ENCODE measurements at regions of chr4 and their contacts with region 1.

Region 1: DNA sequence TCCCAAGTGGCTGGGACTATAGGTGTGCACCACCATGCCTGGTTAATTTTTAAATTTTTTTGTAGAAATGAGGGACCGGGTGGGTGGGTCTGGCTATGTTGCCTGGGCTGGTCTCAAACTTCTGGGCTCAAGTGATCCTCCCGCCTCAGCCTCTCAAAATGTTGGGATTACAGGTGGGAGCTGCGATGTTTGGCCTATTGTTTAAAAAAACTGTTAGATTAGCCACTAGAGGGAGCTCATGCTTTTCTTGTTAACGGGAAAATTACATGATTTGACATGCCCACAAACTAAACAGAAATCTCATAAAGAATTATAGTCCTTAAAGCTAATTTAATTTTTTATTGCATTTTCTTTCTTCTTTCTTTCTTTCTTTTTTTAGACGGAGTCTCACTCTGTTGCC is 5.0 kb upstream of the SDAD1 start:
- DNase-seq: peak in 2 of 5 donors; percentile 67 to 73
- H3K4me3 ChIP-seq: no peak overlapping the region
- H3K27ac ChIP-seq: no peak overlapping the region
- H3K4me1 ChIP-seq: peaks cover 0 to 6% (median 3%) of the 10 kb centered on the region in 3 donors
- H3K27me3 ChIP-seq: no peaks in the 10 kb centered on the region
- CTCF ChIP-seq: peak; percentile 71

Region 2: DNA sequence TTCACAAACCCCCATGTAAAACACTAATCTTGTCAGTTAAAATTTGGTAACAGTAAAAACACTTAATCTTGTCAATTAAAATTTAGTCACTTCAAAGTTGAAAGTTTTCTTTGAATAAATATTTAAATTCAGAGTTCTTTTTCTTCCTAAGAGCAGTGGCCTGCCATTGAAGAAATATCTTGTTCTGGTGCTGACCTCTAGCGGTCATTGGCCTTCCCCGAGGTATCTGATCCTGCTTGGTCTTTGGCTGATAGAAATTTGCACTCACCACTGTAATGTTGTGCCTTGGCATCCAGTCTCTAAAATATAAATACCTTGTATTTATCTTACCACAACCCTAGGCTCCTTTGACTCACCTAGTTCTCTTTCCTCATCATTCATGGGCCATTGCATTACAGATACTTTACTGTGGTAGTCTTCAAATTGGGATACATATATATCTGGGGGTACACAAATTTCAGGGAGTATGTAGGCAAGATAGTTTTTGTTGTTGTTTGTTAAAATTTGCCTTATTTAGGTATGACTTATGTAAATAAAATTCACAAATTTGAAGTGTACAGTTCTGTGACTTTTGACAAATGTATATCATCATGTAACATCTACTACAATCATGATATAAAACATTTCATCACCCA is 72.0 kb after region 1 on chr4:
- intact Hi-C with region 1: loop called (anchors 5 kb)
- DNase-seq: peak in 4 of 5 donors; percentile 57 to 88 (median 80)
- H3K4me3 ChIP-seq: no peak overlapping the region
- H3K27ac ChIP-seq: no peak overlapping the region
- H3K4me1 ChIP-seq: no peaks in the 10 kb centered on the region
- H3K27me3 ChIP-seq: no peaks in the 10 kb centered on the region
- CTCF ChIP-seq: peak; percentile 89